ENCODE measurements at regions of chr2 and their contacts with region 1.

Region 1: DNA sequence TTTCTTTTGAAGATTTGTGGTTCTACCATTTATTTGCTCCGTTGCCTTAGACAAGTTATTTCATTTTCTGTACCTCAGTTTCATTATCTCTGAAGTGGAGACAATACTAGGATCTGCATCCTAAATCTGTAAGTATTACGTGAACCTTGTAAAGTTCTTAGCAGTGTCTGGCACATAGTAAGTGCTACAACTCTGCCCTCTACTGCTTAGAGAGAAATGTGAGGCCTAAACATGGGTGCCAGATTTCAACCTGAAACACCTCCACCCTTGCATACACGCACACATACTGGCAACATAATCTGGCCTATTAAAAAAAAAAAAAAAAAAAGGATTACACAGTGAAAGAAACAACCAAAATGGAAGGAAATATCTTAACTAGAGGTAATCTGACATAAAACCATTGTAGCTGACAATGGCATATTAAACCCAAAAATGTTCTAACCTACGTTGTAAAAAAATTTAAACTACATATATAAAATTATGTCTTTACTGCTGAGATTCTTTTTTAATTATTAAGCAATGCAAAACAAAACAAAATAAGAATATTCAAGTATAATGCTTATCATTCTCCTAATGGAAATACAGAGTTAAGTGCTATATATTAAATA is 132.6 kb downstream of the MAP2 start:
- H3K4me3 Mint-ChIP-seq: no peak overlapping the region
- H3K27ac Mint-ChIP-seq: no peak overlapping the region
- H3K4me1 Mint-ChIP-seq: no peaks in the 10 kb centered on the region
- H3K27me3 Mint-ChIP-seq: peaks cover 2% of the 10 kb centered on the region

Region 2: GRCh38 chr2:209423562-209424198 is 132.8 kb before region 1 on chr2 and contains the start of gene MAP2:
- intact Hi-C with region 1: loop called (anchors 5 kb)
- H3K4me3 Mint-ChIP-seq: peak within 1 kb of the TSS; percentile 60
- H3K27ac Mint-ChIP-seq: no peak within 1 kb of the TSS
- H3K4me1 Mint-ChIP-seq: peaks cover 9% of the 10 kb centered on the region
- H3K27me3 Mint-ChIP-seq: peaks cover 45% of the 10 kb centered on the region

Region 3: DNA sequence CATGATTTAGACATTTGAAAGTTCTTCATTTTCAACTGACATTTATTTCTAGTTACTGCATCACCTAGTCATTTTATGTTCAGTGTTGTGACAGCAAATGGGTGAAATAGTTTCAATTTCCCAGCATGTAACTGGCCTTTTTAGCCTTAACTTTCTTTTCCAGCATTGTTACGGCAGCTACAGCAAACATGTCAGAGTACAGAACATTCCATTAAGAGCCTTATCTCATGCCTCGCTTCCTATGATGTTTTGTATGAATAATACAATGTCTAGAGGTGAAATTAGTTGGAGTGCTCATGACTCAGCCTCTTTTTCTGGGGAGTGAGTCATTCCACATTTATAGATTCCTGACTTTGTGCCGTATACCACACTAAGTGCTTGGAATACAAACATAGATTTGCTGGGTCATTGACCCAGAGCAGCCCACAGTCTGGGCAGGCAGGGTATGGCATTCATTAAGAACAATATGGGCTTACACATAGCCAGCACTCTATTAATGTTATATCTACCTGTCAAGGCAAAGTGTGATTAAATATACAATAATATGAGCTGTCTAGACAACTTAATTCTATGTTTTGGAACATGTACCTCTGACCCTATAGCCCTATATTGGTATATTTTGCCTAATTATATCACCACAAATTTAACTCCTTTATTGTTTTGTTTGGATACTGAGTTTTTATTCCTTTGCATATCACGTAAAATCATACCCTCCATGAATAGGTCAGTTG is 60.4 kb before region 1 on chr2:
- intact Hi-C with region 1: no loop called
- H3K4me3 Mint-ChIP-seq: no peak overlapping the region
- H3K27ac Mint-ChIP-seq: no peak overlapping the region
- H3K4me1 Mint-ChIP-seq: peaks cover 8% of the 10 kb centered on the region
- H3K27me3 Mint-ChIP-seq: peaks cover 1% of the 10 kb centered on the region

Region 4: DNA sequence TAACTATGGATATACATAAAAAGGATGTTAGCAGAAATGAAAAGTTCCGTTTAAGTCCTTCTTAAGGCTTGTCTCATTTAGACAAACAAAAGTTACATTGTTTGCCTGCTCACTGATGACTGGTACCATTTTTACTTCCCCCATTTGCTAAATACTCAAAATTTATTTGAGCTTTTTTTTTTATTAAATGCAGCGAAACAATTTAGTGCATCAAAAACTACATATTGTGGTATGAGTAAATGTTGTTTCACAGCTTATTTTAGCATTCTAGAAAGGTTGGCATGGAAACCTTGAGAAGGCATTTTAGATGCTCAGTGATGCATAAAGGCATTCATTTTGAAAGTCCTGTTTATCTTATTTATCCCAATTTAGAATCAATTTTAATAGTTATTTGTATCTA is 32.6 kb before region 1 on chr2:
- intact Hi-C with region 1: no loop called
- H3K4me3 Mint-ChIP-seq: no peak overlapping the region
- H3K27ac Mint-ChIP-seq: no peak overlapping the region
- H3K4me1 Mint-ChIP-seq: peaks cover 23% of the 10 kb centered on the region
- H3K27me3 Mint-ChIP-seq: peaks cover 1% of the 10 kb centered on the region